Uterus (tissue), 4 donors: ENCODE measurements at regions of chr15 and their contacts with region 1.

Region 1: DNA sequence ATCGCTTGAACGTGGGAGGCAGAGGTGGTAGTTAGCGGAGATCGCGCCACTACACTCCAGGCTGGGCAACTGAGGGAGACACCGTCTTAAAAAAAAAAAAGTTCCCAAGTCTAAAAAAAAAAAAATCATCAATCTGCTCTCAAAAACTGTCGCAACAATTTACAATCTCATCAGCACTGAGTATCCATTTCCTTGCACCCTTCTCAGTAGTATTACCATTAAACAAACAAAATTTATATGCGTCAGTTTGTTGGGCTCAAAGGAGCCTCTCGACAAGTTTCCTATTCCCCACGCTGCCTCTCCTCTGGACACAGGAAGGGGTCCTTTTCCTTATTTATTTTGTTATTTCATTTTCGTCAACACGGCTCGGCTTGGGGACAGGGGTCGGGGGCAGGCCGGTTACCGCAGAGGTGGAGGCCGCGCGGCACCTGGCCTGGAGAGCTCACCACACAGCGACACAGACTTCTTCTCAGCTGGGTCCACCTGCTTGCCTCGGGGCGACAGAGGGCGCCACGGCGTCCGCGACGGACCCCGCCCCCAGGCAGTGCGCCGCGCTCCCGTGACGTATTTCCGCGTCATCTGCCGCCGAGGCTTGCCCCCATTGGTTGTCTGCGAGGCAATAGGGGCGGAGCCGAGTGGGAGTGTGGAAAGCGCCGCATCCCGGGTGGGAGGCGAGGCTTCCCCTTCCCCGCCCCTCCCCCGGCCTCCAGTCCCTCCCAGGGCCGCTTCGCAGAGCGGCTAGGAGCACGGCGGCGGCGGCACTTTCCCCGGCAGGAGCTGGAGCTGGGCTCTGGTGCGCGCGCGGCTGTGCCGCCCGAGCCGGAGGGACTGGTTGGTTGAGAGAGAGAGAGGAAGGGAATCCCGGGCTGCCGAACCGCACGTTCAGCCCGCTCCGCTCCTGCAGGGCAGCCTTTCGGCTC is at the start of gene MAP2K1:
- DNase-seq: peak; percentile 98 to 99
- H3K4me3 ChIP-seq: peak within 1 kb of the TSS; percentile 68 to 81
- H3K27ac ChIP-seq: peak within 1 kb of the TSS; percentile 88 to 93
- H3K4me1 ChIP-seq: peaks cover 0 to 5% of the 10 kb centered on the region in 2 donors
- H3K27me3 ChIP-seq: no peaks in the 10 kb centered on the region
- CTCF ChIP-seq: peak; percentile 78 to 91 (median 88)
- POLR2A ChIP-seq: peak; percentile 29 to 71
- total RNA-seq, gene MAP2K1: 13.2 to 46.4 (median 33.5) TPM

Region 2: DNA sequence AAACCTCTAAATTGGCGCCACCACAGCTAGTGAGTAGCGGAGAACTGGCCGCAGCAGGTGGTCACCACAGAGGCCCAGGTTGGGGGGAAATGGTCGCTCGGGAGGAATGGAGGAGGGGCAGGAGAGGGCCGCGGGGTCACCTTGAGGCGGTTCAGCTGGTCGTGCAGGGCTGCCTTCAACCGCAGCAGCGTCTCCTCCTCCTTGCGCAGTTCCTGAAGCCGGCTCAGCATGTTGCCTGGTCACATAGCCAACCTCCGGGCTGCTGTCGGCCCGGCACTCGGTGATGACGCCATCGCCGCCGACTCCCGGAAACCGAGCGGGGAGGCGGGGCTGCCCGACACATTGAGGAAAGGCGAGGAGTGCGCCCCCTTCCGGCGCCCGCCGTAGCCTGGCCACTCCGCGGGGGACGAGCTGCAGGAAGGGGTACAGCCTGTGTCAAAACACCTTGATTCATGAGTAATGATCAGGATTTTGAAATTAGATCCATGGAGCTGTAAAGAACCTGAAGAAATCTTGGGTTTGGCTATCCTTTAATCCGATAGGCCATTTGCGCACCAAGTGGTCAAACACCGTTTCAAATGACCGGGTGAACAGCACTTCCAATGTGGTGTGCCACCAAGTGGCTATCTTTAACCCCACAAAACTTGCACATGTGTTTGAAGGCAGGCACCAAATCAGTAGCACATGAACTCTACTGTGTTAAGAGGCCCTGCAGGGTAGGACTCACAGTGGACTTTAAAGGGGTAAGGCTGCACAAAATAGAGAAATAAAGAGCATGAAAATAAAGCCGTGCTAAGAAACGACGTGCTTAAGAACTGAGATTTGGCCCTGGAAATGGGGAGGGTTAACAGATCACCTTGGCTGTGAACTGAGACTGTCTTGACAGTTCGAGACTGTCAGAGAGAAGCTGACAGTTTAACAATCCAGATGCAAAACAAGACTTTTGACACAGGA is 111.3 kb after region 1 on chr15 and contains the start of gene SNAPC5:
- intact Hi-C with region 1: loop called (anchors 5 kb)
- DNase-seq: peak; percentile 94 to 95
- H3K4me3 ChIP-seq: peak within 1 kb of the TSS; percentile 64 to 96
- H3K27ac ChIP-seq: peak within 1 kb of the TSS; percentile 81 to 86
- H3K4me1 ChIP-seq: peaks cover 0 to 7% of the 10 kb centered on the region in 2 donors
- H3K27me3 ChIP-seq: no peaks in the 10 kb centered on the region
- CTCF ChIP-seq: peak; percentile 96 to 99 (median 98)
- POLR2A ChIP-seq: peak; percentile 50 to 66
- total RNA-seq, gene SNAPC5: 17.1 to 45.6 (median 24.6) TPM